Activated naive CD8-positive, alpha-beta T cell treated with anti-CD3 and anti-CD28 coated beads, Interleukin-2, amount 10 ng/mL, durations not matched to agents 7 days and 5 days (primary cell): ENCODE measurements at regions of chr20 and their contacts with region 1.

Region 1: GRCh38 chr20:63520504-63520933 is at the start of gene PPDPF:
- DNase-seq: peak; percentile 93
- ATAC-seq: peak; percentile 72
- H3K4me3 Mint-ChIP-seq: peak within 1 kb of the TSS; percentile 79
- H3K27ac Mint-ChIP-seq: peak within 1 kb of the TSS; percentile 75
- H3K4me1 Mint-ChIP-seq: peaks cover 9% of the 10 kb centered on the region
- H3K27me3 Mint-ChIP-seq: peaks cover 6% of the 10 kb centered on the region
- total RNA-seq, gene PPDPF: 242 to 248 TPM

Region 2: DNA sequence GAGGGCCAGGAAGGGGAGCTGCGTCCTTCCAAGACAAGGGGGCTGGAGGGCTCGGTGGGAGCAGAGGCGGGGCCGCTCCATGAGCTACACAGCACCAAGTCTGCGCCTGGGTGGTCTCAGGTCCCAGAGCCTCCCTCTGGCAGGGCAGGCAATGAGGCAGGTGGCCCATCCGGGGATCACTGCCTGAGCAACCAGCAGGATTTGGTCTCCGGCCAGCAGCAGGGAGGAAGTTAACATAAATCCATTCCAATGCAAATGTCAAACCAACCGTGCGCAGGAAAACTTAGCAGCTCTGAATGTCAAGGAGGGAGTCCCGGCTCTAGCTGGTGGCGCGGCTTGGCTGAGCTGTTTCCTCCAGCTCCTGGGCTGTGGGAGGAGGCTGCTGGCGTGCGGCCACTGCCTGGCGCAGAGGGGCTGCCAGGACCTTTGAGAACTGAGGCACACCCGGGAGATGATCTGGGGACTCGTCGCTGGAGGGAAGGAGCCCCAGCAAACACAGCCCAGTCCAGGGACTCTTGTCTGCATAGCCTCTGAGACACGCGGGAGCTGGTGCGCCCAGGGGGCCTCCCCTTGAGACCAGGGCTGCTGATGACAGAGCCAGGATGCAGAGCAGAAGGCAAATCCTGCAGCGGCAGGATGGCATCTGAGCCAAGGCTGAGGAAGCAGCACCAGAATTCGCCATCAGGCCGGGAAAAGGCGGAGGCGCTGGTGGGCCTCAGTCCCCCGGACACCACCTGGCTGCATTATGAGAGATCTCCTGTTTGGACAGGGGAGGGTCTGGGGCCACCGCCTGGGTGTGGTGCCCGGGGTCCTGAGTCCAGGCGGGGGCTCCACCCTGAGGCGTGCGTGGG is 126.2 kb before region 1 on chr20:
- POLR2A ChIA-PET with region 1: no interaction called
- DNase-seq: no peak
- ATAC-seq: no peak
- H3K4me3 Mint-ChIP-seq: no peak overlapping the region
- H3K27ac Mint-ChIP-seq: no peak overlapping the region
- H3K4me1 Mint-ChIP-seq: no peaks in the 10 kb centered on the region
- H3K27me3 Mint-ChIP-seq: peaks cover 2% of the 10 kb centered on the region

Region 3: GRCh38 chr20:63442100-63442493 is 78.4 kb before region 1 on chr20:
- POLR2A ChIA-PET with region 1: interaction called, 11 read pairs
- DNase-seq: peak; percentile 74
- ATAC-seq: peak; percentile 46
- H3K4me3 Mint-ChIP-seq: peak overlapping the region; percentile 44
- H3K27ac Mint-ChIP-seq: peak overlapping the region; percentile 47
- H3K4me1 Mint-ChIP-seq: peaks cover 12% of the 10 kb centered on the region
- H3K27me3 Mint-ChIP-seq: peaks cover 4% of the 10 kb centered on the region

Region 4: DNA sequence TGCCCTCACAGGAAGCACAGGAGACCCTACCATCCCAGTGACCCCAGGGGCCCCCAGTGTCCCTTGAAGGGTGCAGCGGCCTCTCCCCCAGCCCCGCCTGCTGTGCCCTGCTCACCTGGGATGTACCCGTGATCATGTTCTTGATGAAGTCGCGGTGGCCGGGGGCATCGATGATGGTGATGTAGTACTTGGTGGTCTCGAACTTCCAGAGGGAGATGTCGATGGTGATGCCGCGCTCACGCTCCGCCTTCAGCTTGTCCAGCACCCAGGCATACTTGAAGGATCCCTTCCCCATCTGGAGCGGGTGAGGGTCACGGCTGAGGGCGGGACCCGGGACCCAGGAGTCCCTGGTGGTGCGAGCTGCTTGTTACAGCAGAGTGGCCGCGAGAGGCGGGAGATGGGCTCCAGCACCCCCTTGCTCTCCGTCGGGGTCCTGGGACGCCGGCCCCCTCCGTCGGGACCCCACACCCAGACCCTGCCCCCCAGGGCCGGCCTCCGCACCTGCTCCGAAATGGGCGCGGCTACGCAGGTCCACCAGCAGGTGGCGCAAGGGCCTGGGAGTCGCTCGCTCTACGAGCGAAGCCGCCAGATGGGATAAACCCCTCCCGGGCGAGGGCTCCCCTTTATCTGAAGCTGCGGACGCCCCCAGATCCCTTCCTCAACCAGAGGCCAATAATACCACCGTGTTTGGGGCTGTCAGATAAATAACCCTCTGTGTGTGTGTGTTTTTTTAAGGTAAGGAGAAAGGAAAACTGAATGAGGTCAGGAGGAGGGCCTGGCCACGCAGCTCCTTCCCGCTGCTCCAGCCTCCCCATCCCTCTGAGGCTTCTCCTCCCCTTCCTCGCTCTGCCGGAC is 24.6 kb before region 1 on chr20:
- POLR2A ChIA-PET with region 1: interaction called, 13 read pairs
- DNase-seq: peak; percentile 82
- ATAC-seq: peak; percentile 62
- H3K4me3 Mint-ChIP-seq: peak overlapping the region; percentile 50
- H3K27ac Mint-ChIP-seq: no peak overlapping the region
- H3K4me1 Mint-ChIP-seq: peaks cover 2% of the 10 kb centered on the region
- H3K27me3 Mint-ChIP-seq: peaks cover 21% of the 10 kb centered on the region

Region 5: DNA sequence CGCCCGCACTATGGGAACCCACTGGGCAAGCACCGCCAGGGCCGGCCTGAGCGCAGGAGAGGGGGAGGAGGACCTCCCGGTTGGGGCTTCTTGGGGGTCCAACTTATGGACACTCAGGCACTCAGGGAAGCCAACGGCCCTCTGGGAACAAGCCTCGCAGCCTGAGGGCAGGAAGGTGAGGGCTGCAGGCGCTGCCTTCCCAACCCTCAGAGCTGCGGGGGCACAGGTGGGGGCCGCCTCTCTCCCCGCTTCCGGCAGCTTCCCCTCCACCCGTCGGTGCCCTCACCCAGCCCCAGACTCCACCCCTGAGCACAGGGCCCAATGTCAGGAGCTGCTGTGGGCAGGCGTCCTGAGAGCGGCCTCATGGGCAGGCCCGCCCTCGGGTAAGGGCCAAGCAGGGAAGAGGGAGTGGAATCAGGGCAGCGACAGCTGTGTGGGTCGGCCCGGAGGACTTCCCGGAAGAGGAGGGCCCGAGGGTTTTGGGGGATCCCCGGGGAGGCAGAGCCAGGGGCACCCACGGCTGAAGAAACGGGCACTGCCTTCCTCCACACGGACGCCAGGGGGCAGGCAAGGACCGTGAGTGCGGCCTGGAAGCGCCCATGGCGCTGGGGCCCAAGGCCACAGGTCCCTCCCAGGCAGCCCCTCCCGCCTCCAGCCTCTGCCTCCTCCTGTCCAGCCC is 17.1 kb after region 1 on chr20:
- POLR2A ChIA-PET with region 1: interaction called, 88 read pairs
- DNase-seq: peak; percentile 96
- ATAC-seq: peak; percentile 96
- H3K4me3 Mint-ChIP-seq: peak overlapping the region; percentile 76
- H3K27ac Mint-ChIP-seq: peak overlapping the region; percentile 93
- H3K4me1 Mint-ChIP-seq: no peaks in the 10 kb centered on the region
- H3K27me3 Mint-ChIP-seq: no peaks in the 10 kb centered on the region

Region 6: GRCh38 chr20:63553227-63553932 is 32.9 kb after region 1 on chr20:
- POLR2A ChIA-PET with region 1: interaction called, 10 read pairs
- DNase-seq: peak; percentile 92
- ATAC-seq: peak; percentile 69
- H3K4me3 Mint-ChIP-seq: peak overlapping the region; percentile 78
- H3K27ac Mint-ChIP-seq: peak overlapping the region; percentile 91
- H3K4me1 Mint-ChIP-seq: peaks cover 7% of the 10 kb centered on the region
- H3K27me3 Mint-ChIP-seq: peaks cover 21% of the 10 kb centered on the region

Region 7: GRCh38 chr20:63574156-63574828 is 53.8 kb after region 1 on chr20 and contains the start of gene HELZ2:
- POLR2A ChIA-PET with region 1: interaction called, 14 read pairs
- DNase-seq: peak; percentile 77
- ATAC-seq: peak; percentile 88
- H3K4me3 Mint-ChIP-seq: peak within 1 kb of the TSS; percentile 91
- H3K27ac Mint-ChIP-seq: peak within 1 kb of the TSS; percentile 95
- H3K4me1 Mint-ChIP-seq: no peaks in the 10 kb centered on the region
- H3K27me3 Mint-ChIP-seq: peaks cover 19% of the 10 kb centered on the region
- total RNA-seq, gene HELZ2: 118 to 128 TPM

Region 8: GRCh38 chr20:63612276-63612928 is 91.9 kb after region 1 on chr20:
- POLR2A ChIA-PET with region 1: no interaction called
- DNase-seq: no peak
- ATAC-seq: no peak
- H3K4me3 Mint-ChIP-seq: no peak overlapping the region
- H3K27ac Mint-ChIP-seq: no peak overlapping the region
- H3K4me1 Mint-ChIP-seq: no peaks in the 10 kb centered on the region
- H3K27me3 Mint-ChIP-seq: no peaks in the 10 kb centered on the region

Region 9: DNA sequence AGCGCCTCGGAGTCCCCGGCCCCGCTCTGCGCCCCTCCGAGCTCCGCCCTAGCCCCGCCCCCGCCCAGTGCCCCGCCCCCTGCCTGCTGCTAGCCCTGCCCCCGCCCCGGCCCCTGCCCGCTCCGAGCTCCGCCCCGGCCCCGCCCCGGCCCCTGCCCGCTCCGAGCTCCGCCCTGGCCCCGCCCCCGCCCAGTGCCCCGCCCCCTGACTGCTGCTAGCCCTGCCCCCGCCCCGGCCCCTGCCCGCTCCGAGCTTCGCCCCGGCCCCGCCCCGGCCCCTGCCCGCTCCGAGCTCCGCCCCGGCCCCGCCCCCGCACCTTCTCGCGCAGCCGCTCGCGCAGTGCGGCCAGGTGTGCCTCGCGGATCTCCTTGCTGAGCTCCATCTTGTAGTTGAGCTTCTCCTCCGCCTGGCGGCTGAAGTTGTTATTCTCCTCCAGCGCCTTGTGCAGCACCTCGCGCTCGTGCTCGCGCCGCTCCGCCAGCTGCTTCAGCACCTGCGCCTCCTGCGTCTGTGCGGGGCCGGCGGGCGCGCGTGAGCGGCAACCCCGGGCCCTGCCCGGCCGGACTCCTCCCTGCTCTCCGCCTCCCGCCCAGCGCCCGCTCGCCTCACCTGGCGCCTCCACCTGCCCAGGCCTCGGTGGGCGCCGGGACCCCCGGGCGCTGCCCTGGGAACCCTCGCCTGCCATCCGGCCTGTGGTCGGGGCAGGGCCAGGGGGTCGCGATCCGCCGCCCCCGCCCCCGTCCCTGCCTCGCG is 121.4 kb after region 1 on chr20:
- POLR2A ChIA-PET with region 1: interaction called, 20 read pairs
- DNase-seq: peak; percentile 98
- ATAC-seq: peak; percentile 68
- H3K4me3 Mint-ChIP-seq: peak overlapping the region; percentile 70
- H3K27ac Mint-ChIP-seq: peak overlapping the region; percentile 70
- H3K4me1 Mint-ChIP-seq: peaks cover 24% of the 10 kb centered on the region
- H3K27me3 Mint-ChIP-seq: no peaks in the 10 kb centered on the region